ENCODE measurements at regions of chr1 and their contacts with region 1.

Region 1: DNA sequence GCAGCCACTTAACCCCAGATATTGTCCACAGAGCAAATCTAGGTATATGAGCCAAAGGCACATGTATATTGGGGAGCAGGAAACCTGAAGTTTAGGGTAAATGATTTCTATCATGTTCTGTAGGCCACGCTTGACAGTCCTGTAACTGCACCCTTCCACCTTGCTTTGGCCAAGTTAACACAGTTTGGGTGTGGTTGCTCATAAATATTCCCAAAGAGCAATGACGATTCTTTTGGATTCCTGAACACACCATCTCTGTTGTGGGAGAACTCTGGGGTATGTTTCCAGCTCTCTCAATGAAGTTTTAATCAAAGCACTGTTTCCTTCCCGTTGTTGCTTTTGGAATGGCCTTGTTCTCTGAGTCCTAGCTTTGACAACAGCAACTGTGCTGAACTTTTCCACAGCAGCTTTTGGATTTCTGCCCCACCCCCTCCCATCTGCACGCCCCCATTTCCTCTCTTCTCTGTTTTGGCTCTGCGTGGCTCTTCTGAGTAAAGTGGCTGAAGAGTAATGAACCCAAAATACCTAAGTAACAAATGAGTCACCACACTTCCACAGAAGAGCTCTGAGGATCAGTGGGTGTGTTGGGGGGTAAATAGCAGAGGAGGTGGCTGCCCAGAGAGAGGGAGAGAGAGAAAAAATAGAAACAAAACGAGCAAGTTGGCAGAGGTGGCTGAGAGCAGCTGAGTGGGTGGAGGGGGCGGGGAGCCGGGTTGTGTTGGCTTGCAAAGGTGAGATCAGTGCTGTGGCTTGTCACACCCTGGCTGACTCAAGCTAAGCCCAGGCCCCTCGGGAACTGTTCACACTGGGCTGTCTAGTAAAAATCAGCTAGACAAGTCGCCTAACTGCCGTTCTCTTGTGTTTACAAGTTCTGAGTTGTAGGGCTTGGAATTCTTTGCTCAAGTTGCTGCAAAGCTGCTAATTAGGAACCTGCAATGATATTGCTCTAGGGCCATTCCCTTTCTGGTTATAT is 26.9 kb upstream of the RAP1A start:
- DNase-seq: peak; percentile 75
- ATAC-seq: peak; percentile 96
- H3K4me3 Mint-ChIP-seq: peak overlapping the region; percentile 73
- H3K27ac Mint-ChIP-seq: peak overlapping the region; percentile 96
- H3K4me1 Mint-ChIP-seq: peaks cover 51% of the 10 kb centered on the region
- H3K27me3 Mint-ChIP-seq: no peaks in the 10 kb centered on the region

Region 2: DNA sequence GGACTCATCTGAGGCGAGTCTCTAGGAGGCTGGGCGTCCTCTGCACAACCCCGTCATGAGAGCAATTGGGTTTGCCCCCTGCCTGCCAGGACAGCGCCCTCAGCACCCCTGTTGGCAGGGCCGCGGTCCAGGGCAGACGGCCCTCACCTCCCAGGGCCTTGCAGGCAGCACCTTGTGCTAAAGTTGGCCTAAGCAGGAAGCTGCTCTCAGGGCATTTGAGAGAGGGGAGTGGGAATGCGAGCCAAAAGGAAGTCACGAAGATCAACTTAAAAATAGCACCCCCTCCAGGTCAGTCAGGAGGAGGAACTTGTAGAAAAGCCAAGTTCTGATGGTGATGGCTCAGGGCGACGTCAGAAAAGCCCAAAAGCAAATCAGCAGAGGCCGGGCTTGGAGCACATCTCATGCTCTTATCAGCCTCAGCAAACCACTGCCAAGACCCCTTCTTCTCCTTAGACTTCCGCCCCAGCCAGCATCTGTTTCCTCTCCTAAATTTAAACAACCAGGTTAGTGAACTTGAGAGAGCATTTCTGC is 76.6 kb before region 1 on chr1:
- POLR2A ChIA-PET with region 1: interaction called, 20 read pairs
- DNase-seq: peak; percentile 66
- ATAC-seq: peak; percentile 74
- H3K4me3 Mint-ChIP-seq: peak overlapping the region; percentile 74
- H3K27ac Mint-ChIP-seq: peak overlapping the region; percentile 90
- H3K4me1 Mint-ChIP-seq: peaks cover 52% of the 10 kb centered on the region
- H3K27me3 Mint-ChIP-seq: no peaks in the 10 kb centered on the region

Region 3: GRCh38 chr1:111603979-111604378 is 11.3 kb after region 1 on chr1:
- POLR2A ChIA-PET with region 1: interaction called, 79 read pairs
- DNase-seq: peak; percentile 73
- ATAC-seq: peak; percentile 99
- H3K4me3 Mint-ChIP-seq: peak overlapping the region; percentile 65
- H3K27ac Mint-ChIP-seq: peak overlapping the region; percentile 90
- H3K4me1 Mint-ChIP-seq: peaks cover 53% of the 10 kb centered on the region
- H3K27me3 Mint-ChIP-seq: no peaks in the 10 kb centered on the region

Region 4: DNA sequence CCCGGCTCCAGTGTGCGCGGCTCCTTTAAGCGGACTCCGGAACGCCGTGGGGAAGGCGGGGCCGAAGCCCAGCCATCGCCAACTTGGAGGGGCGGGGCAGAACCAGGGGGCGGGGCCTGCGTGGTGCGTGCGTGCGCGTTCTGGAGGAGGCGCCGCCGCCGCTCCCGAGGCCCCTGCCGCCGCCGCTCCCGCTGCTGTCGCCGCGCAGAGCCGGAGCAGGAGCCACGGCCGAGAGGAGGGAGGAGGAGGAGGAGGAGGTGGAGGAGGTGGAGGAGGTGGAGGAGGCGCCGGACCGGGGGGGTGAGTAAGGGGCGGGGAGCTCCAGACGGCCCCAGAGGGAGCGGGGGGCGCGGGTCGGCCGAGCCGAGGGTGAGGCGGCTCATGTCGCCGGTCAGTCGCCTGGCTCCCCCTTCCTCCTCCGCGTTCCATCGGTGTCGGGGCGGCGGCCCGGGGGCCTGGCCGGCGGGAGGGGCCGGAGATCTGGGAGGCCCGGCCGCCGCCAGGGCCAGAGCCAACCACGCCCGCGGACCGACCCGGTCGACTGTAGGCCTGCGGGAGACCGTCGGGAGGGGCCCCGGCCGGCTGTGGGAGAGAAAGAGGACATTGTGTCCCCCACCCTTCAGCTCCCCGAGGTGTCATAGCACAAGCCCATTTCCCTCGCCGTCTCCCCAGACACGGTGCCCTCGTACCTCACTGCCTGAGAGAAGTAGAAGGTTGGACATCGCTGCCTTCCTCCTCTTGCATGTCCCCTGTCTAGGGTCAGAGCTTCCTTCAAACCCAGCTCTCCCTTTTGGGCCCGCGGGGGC is 27.2 kb after region 1 on chr1 and contains the start of gene RAP1A:
- POLR2A ChIA-PET with region 1: interaction called, 98 read pairs
- DNase-seq: peak; percentile 95
- ATAC-seq: peak; percentile 69
- H3K4me3 Mint-ChIP-seq: peak within 1 kb of the TSS; percentile 99
- H3K27ac Mint-ChIP-seq: peak within 1 kb of the TSS; percentile 91
- H3K4me1 Mint-ChIP-seq: peaks cover 56% of the 10 kb centered on the region
- H3K27me3 Mint-ChIP-seq: no peaks in the 10 kb centered on the region
- total RNA-seq, gene RAP1A: 134 to 139 TPM

Measured in activated naive CD8-positive, alpha-beta T cell treated with anti-CD3 and anti-CD28 coated beads, Interleukin-2, amount 10 ng/mL, durations not matched to agents 7 days and 5 days (primary cell).